ENCODE measurements at regions of chr10 and their contacts with region 1.

Region 1: GRCh38 chr10:43105102-43105785 is 28.4 kb downstream of the RET start:
- DNase-seq: peak; percentile 75 to 92
- H3K4me3 ChIP-seq: peak overlapping the region; percentile 50 to 73 (median 60)
- H3K27ac ChIP-seq: peak overlapping the region in 1 of 5 donors; percentile 31
- H3K4me1 ChIP-seq: peaks cover 6 to 19% (median 18%) of the 10 kb centered on the region in 4 donors
- H3K27me3 ChIP-seq: peaks cover 0 to 49% (median 10%) of the 10 kb centered on the region in 3 donors
- CTCF ChIP-seq: peak in 6 of 7 experiments; percentile 17 to 99 (median 98)
- EP300 ChIP-seq: no peak
- POLR2A ChIP-seq: no peak

Region 2: DNA sequence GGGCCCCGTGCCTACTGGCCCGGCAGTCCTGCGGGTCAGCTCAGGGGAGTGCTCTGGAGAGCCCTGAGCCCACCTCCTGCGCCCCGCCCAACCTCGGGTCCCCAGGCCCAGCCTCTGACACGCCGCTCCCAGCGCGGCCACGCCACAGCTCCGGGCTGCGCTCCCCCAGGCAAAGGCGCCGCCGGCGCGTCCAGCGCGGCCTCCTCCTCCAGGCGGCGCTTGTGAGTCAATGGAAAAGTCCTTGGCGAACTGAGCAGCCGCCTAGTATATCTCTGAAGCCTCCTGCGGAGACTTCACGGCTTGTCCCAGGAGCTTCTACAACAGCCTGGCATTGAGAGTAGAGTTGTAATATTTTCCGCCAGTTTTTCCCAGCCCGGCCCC is 352.1 kb before region 1 on chr10:
- intact Hi-C with region 1: loop called (anchors 5 kb)
- DNase-seq: peak; percentile 83 to 90
- H3K4me3 ChIP-seq: peak overlapping the region; percentile 41 to 71 (median 59)
- H3K27ac ChIP-seq: peak overlapping the region in 3 of 5 donors; percentile 5 to 54 (median 19)
- H3K4me1 ChIP-seq: peaks cover 21 to 36% (median 34%) of the 10 kb centered on the region in 4 donors
- H3K27me3 ChIP-seq: peaks cover 0 to 84% (median 39%) of the 10 kb centered on the region in 3 donors
- CTCF ChIP-seq: peak in 5 of 7 experiments; percentile 50 to 83 (median 76)
- EP300 ChIP-seq: no peak
- POLR2A ChIP-seq: no peak

Region 3: DNA sequence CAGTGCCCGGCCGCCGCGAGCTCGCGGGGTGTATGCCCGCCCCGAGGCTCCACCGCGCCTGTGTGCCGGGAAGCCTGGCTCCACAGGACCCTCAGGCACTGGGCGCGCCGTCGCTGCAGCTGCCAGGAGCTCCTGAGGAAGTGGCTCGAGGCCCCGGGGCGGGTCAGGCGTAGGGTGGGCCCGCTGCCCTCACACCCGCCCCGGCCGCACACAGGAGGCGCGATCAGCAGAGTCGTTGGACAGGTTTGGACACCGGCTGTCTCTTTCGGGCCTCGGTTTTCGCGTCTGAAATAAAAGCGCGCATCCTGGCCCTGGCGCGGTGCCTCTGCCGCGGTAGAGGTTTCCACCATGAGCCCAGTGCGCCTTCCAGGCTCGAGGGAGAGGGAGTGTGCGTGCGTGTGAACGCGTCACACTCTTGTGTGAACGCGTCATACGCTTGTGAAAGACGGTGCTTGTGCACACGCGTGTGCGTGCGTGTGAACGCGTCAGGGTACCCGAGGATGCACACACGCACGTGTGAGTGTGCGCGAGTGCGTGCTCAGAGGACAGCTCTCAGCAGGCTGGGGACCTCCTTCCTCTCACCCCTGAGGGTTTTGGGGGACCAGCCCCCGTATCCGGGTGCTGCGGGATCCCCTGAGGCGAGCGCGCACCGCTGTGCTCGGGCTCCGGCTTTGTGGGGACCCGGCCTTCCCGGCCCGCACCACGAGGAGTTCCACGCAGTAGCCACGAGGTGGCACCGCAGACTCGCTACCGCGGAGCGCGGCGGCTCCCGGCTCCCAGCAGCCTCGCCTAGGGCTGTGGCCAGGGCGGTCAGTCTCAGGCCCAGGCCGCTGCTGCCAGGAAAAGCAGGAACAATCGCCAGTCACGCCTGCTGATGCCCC is 238.9 kb before region 1 on chr10:
- intact Hi-C with region 1: loop called (anchors 5 kb)
- DNase-seq: peak; percentile 82 to 89
- H3K4me3 ChIP-seq: peak overlapping the region; percentile 7 to 33 (median 20)
- H3K27ac ChIP-seq: no peak overlapping the region
- H3K4me1 ChIP-seq: peaks cover 7 to 15% (median 12%) of the 10 kb centered on the region in 4 donors
- H3K27me3 ChIP-seq: peaks cover 3 to 41% (median 23%) of the 10 kb centered on the region in 3 donors
- CTCF ChIP-seq: peak in 5 of 7 experiments; percentile 21 to 65 (median 58)
- EP300 ChIP-seq: no peak
- POLR2A ChIP-seq: no peak

Region 4: GRCh38 chr10:42898037-42898960 is 206.9 kb before region 1 on chr10:
- intact Hi-C with region 1: no loop called
- DNase-seq: no peak
- H3K4me3 ChIP-seq: no peak overlapping the region
- H3K27ac ChIP-seq: no peak overlapping the region
- H3K4me1 ChIP-seq: no peaks in the 10 kb centered on the region
- H3K27me3 ChIP-seq: peaks cover 9 to 40% (median 28%) of the 10 kb centered on the region in 3 donors
- CTCF ChIP-seq: no peak
- EP300 ChIP-seq: no peak
- POLR2A ChIP-seq: no peak

Region 5: DNA sequence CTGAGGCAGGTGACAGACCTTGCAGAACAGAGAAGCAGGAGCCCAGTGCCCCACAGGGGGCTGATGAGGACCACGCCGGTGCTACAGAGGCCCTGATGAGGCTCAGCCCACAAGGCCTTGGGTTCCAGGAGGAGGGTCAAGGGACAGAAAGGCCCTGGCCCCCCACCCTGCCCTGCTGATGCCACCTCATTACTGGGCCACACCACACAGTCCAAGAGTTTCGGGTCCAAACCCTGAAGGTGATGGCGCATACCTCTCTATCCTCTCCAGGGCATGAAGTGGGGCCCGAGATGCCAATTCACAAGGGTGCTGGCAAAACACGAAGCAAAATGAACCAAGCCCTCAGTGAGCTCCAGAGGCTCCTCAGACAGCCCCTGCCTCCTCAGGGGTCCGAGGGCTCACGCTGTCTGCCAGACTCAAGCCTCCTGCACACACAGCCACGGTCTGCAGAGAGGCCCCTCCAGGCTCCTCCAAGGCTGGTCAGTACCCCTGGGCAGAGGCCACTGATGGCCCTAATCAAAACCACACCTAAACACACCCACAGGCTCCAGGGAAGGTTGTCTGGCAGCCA is 129.3 kb after region 1 on chr10:
- intact Hi-C with region 1: no loop called
- DNase-seq: no peak
- H3K4me3 ChIP-seq: no peak overlapping the region
- H3K27ac ChIP-seq: no peak overlapping the region
- H3K4me1 ChIP-seq: peaks cover 2 to 11% (median 9%) of the 10 kb centered on the region in 4 donors
- H3K27me3 ChIP-seq: peaks cover 7 to 48% (median 24%) of the 10 kb centered on the region in 3 donors
- CTCF ChIP-seq: no peak
- EP300 ChIP-seq: no peak
- POLR2A ChIP-seq: no peak

Region 6: GRCh38 chr10:43249962-43250614 is 144.8 kb after region 1 on chr10:
- intact Hi-C with region 1: no loop called
- DNase-seq: peak in 1 of 2 donors; percentile 26
- H3K4me3 ChIP-seq: no peak overlapping the region
- H3K27ac ChIP-seq: no peak overlapping the region
- H3K4me1 ChIP-seq: no peaks in the 10 kb centered on the region
- H3K27me3 ChIP-seq: peaks cover 0 to 16% (median 0%) of the 10 kb centered on the region in 3 donors
- CTCF ChIP-seq: no peak
- EP300 ChIP-seq: no peak
- POLR2A ChIP-seq: no peak